ENCODE measurements at regions of chr17 and their contacts with region 1.

Region 1: DNA sequence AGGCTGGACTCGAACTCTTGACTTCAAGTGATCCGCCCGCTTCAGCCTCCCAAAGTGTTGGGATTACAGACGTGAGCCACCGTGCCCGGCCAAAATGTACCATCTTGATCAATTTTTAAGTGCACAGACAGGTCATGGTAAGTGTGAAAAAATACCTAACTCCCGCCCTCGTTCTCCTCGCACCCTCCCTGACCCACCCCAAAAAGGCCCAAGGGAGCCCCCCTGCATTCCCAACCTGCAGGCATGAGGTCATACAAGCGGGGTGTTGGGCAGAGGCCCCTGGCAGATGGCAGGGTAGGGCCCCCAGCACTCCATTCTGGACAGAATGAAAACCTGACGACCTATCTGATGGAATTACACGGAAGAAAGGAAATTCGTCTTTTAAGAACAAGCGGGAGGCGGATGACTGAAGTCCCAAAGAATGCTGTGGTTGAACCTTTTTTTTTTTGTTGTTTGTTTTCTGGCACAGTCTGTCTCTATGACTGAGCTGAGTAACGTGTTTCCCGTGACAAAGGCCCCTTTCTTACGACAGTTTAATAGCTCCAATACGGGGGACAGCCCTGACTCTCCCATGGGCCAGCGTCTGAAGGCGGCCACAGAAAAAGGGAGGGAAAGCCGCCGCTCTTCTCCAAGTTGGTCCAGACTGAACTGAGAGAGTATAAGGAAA is 376.4 kb downstream of the SLC39A11 start:
- DNase-seq: peak; percentile 84
- H3K4me3 Mint-ChIP-seq: peak overlapping the region; percentile 56
- H3K27ac Mint-ChIP-seq: peak overlapping the region; percentile 99
- H3K4me1 Mint-ChIP-seq: peaks cover 60% of the 10 kb centered on the region
- H3K27me3 Mint-ChIP-seq: no peaks in the 10 kb centered on the region
- CTCF ChIP-seq: no peak

Region 2: GRCh38 chr17:72126563-72127486 is 589.2 kb before region 1 on chr17:
- CTCF ChIA-PET with region 1: no interaction called
- intact Hi-C with region 1: loop called (anchors 2 kb)
- DNase-seq: peak; percentile 61
- H3K4me3 Mint-ChIP-seq: peak overlapping the region; percentile 90
- H3K27ac Mint-ChIP-seq: peak overlapping the region; percentile 64
- H3K4me1 Mint-ChIP-seq: peaks cover 35% of the 10 kb centered on the region
- H3K27me3 Mint-ChIP-seq: peaks cover 28% of the 10 kb centered on the region
- CTCF ChIP-seq: no peak

Region 3: GRCh38 chr17:72421128-72422092 is 294.6 kb before region 1 on chr17:
- CTCF ChIA-PET with region 1: interaction called, 5 read pairs
- intact Hi-C with region 1: loop called (anchors 2 kb)
- DNase-seq: peak; percentile 90
- H3K4me3 Mint-ChIP-seq: peak overlapping the region; percentile 51
- H3K27ac Mint-ChIP-seq: peak overlapping the region; percentile 96
- H3K4me1 Mint-ChIP-seq: peaks cover 61% of the 10 kb centered on the region
- H3K27me3 Mint-ChIP-seq: no peaks in the 10 kb centered on the region
- CTCF ChIP-seq: no peak

Region 4: DNA sequence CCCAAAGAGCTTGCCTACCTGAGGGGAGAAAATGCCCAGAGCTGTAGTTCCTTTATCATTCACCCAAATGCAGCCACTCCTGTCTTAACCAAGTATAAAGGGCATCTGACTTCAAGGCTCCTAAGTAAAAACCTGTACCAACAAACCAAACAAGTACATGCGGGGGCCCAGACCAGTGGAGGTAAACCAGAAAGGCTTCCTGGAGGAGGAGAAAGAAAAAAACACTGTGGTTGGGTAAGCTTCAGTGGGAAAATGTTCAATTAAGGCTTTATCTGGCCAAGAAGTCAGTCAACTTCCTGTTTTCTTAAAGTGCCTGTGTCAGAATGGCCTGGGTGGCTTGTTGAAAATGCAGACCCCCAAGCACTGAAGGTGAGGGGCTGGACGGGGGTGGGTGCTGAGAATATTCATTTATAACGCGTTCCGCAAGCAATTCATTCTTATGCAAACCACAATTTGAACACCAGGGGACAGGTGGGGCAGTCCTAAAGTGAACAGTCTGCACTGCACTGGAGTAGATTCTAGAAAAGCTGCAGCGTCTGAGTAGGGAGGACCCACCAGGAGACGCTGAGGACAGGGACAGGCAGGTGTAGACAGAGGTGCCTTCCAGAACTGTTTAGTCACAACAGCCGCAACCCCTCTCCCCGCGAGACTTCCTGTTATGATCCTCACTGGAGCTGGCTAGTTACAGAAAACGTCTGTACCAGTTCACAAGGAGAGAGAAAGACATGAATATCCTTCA is 128.1 kb before region 1 on chr17:
- CTCF ChIA-PET with region 1: no interaction called
- intact Hi-C with region 1: loop called (anchors 10 kb)
- DNase-seq: no peak
- H3K4me3 Mint-ChIP-seq: peak overlapping the region; percentile 88
- H3K27ac Mint-ChIP-seq: peak overlapping the region; percentile 96
- H3K4me1 Mint-ChIP-seq: no peaks in the 10 kb centered on the region
- H3K27me3 Mint-ChIP-seq: no peaks in the 10 kb centered on the region
- CTCF ChIP-seq: no peak

Region 5: DNA sequence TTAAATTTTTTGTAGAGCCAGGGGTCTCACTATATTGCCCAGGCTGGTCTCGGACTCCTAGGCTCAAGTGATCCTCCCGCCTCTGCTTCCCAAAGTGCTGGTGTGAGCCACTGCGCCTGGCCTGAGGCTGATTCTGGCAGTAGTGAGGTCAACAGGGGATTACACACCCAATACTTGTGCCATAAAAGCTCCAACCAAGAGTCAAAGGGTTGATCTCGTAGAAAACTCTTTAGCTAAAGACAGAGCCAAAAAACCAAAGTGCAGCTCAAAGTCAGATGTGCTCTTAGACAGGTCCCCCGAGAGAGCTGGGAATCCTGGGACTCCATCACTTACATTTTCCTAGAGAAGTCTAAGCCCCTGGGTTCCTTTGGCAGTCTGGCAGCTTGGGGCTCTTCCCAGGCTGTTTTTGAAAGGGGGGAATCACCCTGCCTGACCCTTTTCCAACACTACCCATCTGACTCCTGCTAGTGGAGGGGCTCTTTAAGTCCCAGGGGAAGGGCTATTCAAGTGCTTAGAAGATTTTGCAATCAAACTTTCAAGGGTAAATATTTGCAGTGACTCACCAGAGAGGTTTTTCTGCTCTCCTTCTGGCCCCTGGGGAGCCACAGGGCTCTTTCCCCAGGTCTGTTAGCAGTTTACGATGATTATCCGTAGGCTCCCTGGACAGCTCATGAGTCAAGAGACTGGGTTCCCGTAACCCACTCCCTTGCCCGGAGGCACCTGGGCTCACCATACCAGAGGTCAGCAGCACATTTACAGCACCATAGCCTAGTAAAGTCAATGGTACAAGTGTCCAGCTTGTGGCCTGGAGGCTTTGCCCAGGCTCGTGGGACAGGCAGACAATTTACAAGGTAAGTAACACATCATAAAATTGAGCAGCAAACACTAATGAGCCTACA is 32.3 kb before region 1 on chr17:
- CTCF ChIA-PET with region 1: interaction called, 8 read pairs
- intact Hi-C with region 1: loop called (anchors 1 kb)
- DNase-seq: peak; percentile 85
- H3K4me3 Mint-ChIP-seq: peak overlapping the region; percentile 53
- H3K27ac Mint-ChIP-seq: peak overlapping the region; percentile 97
- H3K4me1 Mint-ChIP-seq: peaks cover 43% of the 10 kb centered on the region
- H3K27me3 Mint-ChIP-seq: no peaks in the 10 kb centered on the region
- CTCF ChIP-seq: no peak

Region 6: DNA sequence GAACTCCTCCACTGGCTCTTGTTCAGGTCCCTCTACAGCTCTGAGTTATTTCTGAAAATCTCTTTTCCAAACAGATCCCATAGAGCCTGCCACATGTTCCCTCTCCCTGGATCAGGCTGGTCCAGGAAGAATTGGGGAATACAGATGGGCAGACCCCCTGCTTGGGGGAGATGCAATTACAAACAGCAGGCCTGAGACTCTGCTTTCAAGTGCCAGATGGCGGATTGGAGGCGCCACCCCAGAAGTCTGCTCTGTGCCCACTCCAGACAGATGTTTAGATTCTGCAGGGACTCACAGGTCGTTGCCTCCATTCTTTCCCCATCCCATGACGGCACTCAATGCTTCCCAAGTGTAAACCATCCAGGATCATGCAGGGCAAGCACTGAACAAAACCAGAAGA is 59.9 kb after region 1 on chr17:
- CTCF ChIA-PET with region 1: no interaction called
- intact Hi-C with region 1: no loop called
- DNase-seq: no peak
- H3K4me3 Mint-ChIP-seq: no peak overlapping the region
- H3K27ac Mint-ChIP-seq: no peak overlapping the region
- H3K4me1 Mint-ChIP-seq: no peaks in the 10 kb centered on the region
- H3K27me3 Mint-ChIP-seq: no peaks in the 10 kb centered on the region
- CTCF ChIP-seq: no peak